ENCODE measurements at regions of chr7 and their contacts with region 1.

Region 1: DNA sequence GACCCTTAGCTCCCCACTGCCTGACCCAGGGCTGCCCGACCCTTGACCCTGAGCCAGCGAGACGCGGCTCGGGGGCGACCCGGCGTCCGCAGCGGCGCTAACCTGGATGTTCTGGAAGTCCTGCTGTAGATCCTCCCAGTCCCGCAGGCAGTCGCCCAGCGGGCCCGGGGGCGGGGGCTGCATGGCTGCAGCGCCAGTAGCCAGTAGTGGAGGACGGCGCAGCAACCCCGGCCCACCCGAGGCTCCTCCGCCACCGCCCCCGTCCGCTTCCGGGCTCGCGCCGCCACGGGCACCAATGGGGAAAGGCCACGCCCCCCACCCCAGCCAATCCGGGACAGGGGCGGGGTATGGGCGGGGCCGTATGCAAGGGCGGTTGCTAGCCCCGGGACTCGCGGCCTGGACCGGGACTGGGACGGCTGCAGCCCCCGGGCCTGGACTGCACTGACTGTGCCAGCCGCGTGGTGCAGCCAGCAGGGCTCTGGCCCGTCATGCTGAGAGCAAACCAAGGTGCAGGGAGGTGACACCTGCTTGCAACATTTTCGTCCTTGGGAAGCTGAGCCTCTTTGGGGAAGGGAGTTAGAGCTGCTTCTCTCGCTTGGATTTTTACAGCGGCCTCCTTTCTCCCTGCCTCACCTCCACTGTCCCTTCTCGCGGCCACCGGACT is at the start of gene TMEM120A:
- DNase-seq: peak; percentile 97
- ATAC-seq: peak; percentile 99
- H3K4me3 Mint-ChIP-seq: peak within 1 kb of the TSS; percentile 66
- H3K27ac Mint-ChIP-seq: no peak within 1 kb of the TSS
- H3K4me1 Mint-ChIP-seq: peaks cover 29% of the 10 kb centered on the region
- H3K27me3 Mint-ChIP-seq: no peaks in the 10 kb centered on the region
- total RNA-seq, gene TMEM120A: 14.5 to 15.3 TPM

Region 2: GRCh38 chr7:75878769-75879611 is 115.5 kb before region 1 on chr7 and contains the start of gene RHBDD2:
- CTCF ChIA-PET with region 1: no interaction called
- POLR2A ChIA-PET with region 1: no interaction called
- intact Hi-C with region 1: loop called in 1 of 2 experiments (anchors 1 kb)
- DNase-seq: peak; percentile 99
- ATAC-seq: peak; percentile 97
- H3K4me3 Mint-ChIP-seq: peak within 1 kb of the TSS; percentile 100
- H3K27ac Mint-ChIP-seq: peak within 1 kb of the TSS; percentile 97
- H3K4me1 Mint-ChIP-seq: peaks cover 34% of the 10 kb centered on the region
- H3K27me3 Mint-ChIP-seq: no peaks in the 10 kb centered on the region
- total RNA-seq, gene RHBDD2: 21.6 to 23.2 TPM